PC-3 (cell line): ENCODE measurements at regions of chr1 and their contacts with region 1.

Region 1: DNA sequence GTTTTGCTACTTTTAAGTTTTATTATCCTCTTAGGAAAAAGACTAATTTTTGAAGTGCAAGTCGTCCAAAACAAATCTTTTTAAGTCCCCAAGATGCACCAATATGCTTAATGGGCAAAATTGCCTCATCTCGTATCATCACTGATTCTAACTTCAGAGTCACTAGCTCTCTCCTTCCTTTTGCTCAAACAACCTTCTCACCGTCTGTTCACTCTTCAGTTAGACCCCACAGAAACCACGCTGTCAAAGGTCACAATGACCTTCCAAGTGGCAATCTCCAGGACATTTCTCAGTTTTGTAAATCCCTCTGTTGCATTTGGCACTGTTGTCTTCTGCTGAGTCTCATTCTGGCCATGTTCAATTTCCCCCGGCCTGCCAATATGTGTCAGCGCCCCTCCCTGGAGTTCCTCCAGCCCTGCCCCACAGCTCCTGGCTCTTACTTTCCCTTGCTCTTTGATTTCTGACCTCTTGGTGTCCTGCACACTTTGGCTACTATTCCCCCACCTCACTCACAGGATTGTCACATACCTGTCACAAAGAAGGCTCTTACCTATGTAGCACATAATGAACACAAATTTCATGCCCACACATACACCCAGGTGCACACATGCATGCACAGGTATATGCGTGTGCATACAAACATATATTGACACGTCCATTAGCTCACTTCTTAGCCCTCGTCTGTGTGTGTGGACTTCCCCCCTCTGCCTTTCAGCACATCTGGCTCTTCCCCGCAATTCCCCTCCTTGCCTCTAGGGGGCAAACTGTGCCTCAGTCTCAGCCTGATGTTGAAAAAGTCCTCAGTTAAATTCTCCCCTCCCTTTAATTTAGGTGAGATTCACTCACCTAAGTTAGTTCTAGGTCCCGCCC is 354.0 kb upstream of the DUSP10 start:
- DNase-seq: peak; percentile 77
- ATAC-seq: peak; percentile 71
- H3K4me3 ChIP-seq: no peak overlapping the region
- H3K27ac ChIP-seq: no peak overlapping the region
- H3K4me1 ChIP-seq: peaks cover 5% of the 10 kb centered on the region; the same call in 1 of the 2 replicates
- H3K27me3 ChIP-seq: no peaks in the 10 kb centered on the region
- CTCF ChIP-seq: peak; percentile 98

Region 2: GRCh38 chr1:221766210-221766609 is 329.6 kb before region 1 on chr1:
- CTCF ChIA-PET with region 1: no interaction called
- POLR2A ChIA-PET with region 1: interaction called, 24 read pairs
- intact Hi-C with region 1: no loop called
- DNase-seq: no peak
- ATAC-seq: no peak
- H3K4me3 ChIP-seq: no peak overlapping the region
- H3K27ac ChIP-seq: no peak overlapping the region
- H3K4me1 ChIP-seq: no peaks in the 10 kb centered on the region
- H3K27me3 ChIP-seq: no peaks in the 10 kb centered on the region
- CTCF ChIP-seq: no peak

Region 3: GRCh38 chr1:222165629-222166028 is 69.8 kb after region 1 on chr1:
- CTCF ChIA-PET with region 1: no interaction called
- POLR2A ChIA-PET with region 1: no interaction called
- intact Hi-C with region 1: no loop called
- DNase-seq: no peak
- ATAC-seq: no peak
- H3K4me3 ChIP-seq: no peak overlapping the region
- H3K27ac ChIP-seq: no peak overlapping the region
- H3K4me1 ChIP-seq: no peaks in the 10 kb centered on the region
- H3K27me3 ChIP-seq: no peaks in the 10 kb centered on the region
- CTCF ChIP-seq: no peak